Ovary (tissue), 10 donors: ENCODE measurements at regions of chr17 and their contacts with region 1.

Region 1: DNA sequence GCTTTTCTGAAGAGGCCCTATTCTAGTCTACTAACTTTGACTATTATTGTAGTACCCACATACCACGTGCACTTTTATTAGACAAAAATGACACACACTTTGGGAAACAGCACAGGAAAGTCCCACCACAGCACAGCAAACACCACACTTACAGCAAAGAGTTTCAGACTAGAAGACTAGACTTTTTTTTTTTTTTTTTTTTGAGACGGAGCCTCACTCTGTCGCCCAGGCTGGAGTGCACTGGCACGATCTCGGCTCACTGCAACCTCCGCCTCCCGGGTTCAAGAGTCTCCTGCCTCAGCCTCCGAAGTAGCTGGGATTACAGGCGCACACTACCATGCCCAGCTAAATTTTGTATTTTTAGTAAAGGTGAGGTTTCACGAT is 20.1 kb downstream of the YWHAE start:
- DNase-seq: no peak
- H3K4me3 ChIP-seq: no peak overlapping the region
- H3K27ac ChIP-seq: no peak overlapping the region
- H3K4me1 ChIP-seq: peaks cover 38% of the 10 kb centered on the region
- H3K27me3 ChIP-seq: no peaks in the 10 kb centered on the region
- CTCF ChIP-seq: no peak
- EP300 ChIP-seq: no peak
- POLR2A ChIP-seq: no peak

Region 2: DNA sequence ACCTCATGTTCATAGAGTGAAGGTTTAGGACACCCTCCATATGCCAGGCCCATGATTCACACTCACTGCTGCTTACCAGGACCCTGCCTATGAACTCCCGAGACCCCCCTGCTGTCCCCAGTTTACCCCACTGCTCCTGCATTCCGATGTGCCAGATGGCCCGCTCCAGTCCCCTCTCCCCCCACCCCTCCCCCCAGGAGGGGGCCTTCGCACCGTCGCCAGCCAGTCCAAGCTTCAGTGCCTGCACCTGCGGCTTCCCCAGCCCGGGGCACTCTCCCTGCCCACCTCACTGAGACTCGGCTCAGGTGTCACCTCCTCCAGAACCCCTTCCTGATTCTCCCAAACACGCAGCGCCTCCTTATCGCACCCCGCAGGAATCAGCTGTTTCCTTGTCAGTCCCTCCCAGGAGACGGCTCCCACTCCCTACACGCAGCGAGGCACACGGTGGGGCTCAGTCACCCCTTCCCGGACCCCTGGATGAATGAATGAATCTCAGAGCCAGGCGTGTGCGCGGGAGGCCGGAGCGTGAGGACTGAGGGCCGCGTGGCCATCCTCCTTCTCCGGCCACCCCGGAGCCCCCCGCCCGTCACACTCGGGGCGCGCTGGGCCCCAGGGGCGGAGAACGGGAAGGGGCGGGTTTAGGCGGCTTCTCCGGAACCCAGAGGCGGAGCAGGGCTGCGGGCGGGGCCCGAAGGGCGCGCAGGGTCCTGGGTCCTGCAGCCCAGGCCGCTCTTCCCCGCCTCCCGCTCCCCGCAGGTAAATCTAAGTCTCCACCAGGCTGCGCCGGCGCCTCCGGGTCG is 110.9 kb after region 1 on chr17:
- intact Hi-C with region 1: loop called in 1 of 4 experiments (anchors 10 kb)
- DNase-seq: peak; percentile 56 to 74 (median 67)
- H3K4me3 ChIP-seq: peak overlapping the region; percentile 56
- H3K27ac ChIP-seq: peak overlapping the region; percentile 80 to 82
- H3K4me1 ChIP-seq: peaks cover 8% of the 10 kb centered on the region
- H3K27me3 ChIP-seq: no peaks in the 10 kb centered on the region
- CTCF ChIP-seq: no peak
- EP300 ChIP-seq: no peak
- POLR2A ChIP-seq: peak; percentile 23

Region 3: GRCh38 chr17:1541367-1541904 is 161.5 kb after region 1 on chr17:
- intact Hi-C with region 1: no loop called
- DNase-seq: no peak
- H3K4me3 ChIP-seq: no peak overlapping the region
- H3K27ac ChIP-seq: no peak overlapping the region
- H3K4me1 ChIP-seq: no peaks in the 10 kb centered on the region
- H3K27me3 ChIP-seq: no peaks in the 10 kb centered on the region
- CTCF ChIP-seq: no peak
- EP300 ChIP-seq: no peak
- POLR2A ChIP-seq: no peak